A673 (cell line): ENCODE measurements at regions of chr16 and their contacts with region 1.

Region 1: GRCh38 chr16:25796239-25796638 is 104.5 kb downstream of the HS3ST4 start:
- DNase-seq: no peak
- H3K4me3 ChIP-seq: no peak overlapping the region
- H3K27ac ChIP-seq: peak overlapping the region; percentile 58
- H3K4me1 ChIP-seq: peaks cover 52% of the 10 kb centered on the region
- H3K27me3 ChIP-seq: no peaks in the 10 kb centered on the region
- CTCF ChIP-seq: no peak

Region 2: DNA sequence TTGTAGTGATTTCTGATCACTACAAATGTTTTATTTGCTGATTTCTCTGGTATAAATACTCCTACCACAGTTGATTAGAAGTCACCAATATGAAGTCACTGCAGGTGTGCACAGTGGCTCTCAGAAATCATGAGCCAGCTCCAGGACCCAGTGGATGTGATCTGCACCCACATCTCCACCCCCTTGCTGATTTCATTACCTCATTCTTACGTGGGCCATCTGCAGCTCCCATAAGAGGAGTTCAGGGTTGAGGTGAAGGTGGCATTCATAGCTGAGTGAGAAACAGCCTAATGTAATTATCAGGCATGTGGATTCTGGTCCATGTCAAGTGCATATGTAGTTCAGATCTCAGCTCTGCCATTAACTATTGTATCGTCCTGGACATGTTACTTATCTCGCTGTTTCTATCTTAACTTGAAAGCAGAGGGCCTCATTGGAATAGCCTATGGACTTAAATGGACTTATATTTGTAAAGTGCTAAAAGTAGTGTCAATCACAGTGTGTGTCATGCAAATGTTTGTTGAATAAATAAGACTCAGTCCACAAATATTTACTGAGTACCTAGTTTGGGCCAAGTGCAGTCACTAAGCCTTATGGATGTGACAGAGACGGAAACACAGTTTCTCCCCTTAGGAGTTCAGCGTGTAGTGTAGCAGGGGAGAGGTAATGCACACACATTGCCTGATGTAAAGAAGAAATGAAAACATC is 497.9 kb before region 1 on chr16:
- CTCF ChIA-PET with region 1: no interaction called
- POLR2A ChIA-PET with region 1: no interaction called
- intact Hi-C with region 1: loop called (anchors 10 kb)
- DNase-seq: no peak
- H3K4me3 ChIP-seq: no peak overlapping the region
- H3K27ac ChIP-seq: no peak overlapping the region
- H3K4me1 ChIP-seq: peaks cover 8% of the 10 kb centered on the region
- H3K27me3 ChIP-seq: no peaks in the 10 kb centered on the region
- CTCF ChIP-seq: no peak

Region 3: GRCh38 chr16:25817876-25818275 is 21.6 kb after region 1 on chr16:
- CTCF ChIA-PET with region 1: no interaction called
- POLR2A ChIA-PET with region 1: no interaction called
- intact Hi-C with region 1: loop called (anchors 2 kb)
- DNase-seq: no peak
- H3K4me3 ChIP-seq: no peak overlapping the region
- H3K27ac ChIP-seq: peak overlapping the region; percentile 73
- H3K4me1 ChIP-seq: peaks cover 15% of the 10 kb centered on the region
- H3K27me3 ChIP-seq: no peaks in the 10 kb centered on the region
- CTCF ChIP-seq: no peak

Region 4: GRCh38 chr16:25950586-25951281 is 154.5 kb after region 1 on chr16:
- CTCF ChIA-PET with region 1: no interaction called
- POLR2A ChIA-PET with region 1: no interaction called
- intact Hi-C with region 1: no loop called
- DNase-seq: peak; percentile 25
- H3K4me3 ChIP-seq: no peak overlapping the region
- H3K27ac ChIP-seq: no peak overlapping the region
- H3K4me1 ChIP-seq: no peaks in the 10 kb centered on the region
- H3K27me3 ChIP-seq: no peaks in the 10 kb centered on the region
- CTCF ChIP-seq: no peak